ENCODE measurements at regions of chr14 and their contacts with region 1.

Region 1: DNA sequence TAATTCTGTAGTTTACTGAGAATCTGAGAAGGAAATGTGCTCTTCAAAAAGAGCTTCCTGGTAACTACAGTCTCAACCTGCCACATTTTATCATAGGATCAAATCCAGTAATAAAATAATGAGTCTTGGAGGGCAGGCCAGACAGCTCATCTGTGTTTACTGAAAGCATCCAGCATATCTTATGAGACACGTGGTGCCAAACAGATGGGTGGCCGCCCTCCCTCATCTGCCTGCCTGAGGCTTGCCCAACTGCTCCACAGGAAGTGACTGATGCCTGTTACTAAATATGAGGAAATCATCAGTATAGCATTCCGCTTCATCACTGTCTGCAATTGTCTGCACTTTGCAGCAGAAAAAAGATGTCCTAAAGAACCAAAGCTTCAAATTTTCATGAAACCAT is 13.5 kb downstream of the DHRS7 start:
- DNase-seq: peak; percentile 31 to 87 (median 74)
- ATAC-seq: peak; percentile 97
- H3K4me3 ChIP-seq: no peak overlapping the region
- H3K4me3 Mint-ChIP-seq: no peak overlapping the region
- H3K27ac ChIP-seq: peak overlapping the region; percentile 28 to 87
- H3K27ac Mint-ChIP-seq: peak overlapping the region; percentile 93
- H3K4me1 ChIP-seq: peaks cover 39% of the 10 kb centered on the region
- H3K4me1 Mint-ChIP-seq: peaks cover 54% of the 10 kb centered on the region
- H3K27me3 ChIP-seq: no peaks in the 10 kb centered on the region
- H3K27me3 Mint-ChIP-seq: no peaks in the 10 kb centered on the region
- CTCF ChIP-seq: no peak

Region 2: GRCh38 chr14:60164712-60165546 is 13.2 kb after region 1 on chr14 and contains the start of gene DHRS7:
- CTCF ChIA-PET with region 1: interaction called, 8 read pairs
- POLR2A ChIA-PET with region 1: interaction called, 15 read pairs
- intact Hi-C with region 1: loop called in 1 of 2 experiments (anchors 2 kb)
- DNase-seq: peak; percentile 28 to 89 (median 62)
- ATAC-seq: peak; percentile 70
- H3K4me3 ChIP-seq: peak within 1 kb of the TSS; percentile 68 to 88
- H3K4me3 Mint-ChIP-seq: peak within 1 kb of the TSS; percentile 99
- H3K27ac ChIP-seq: peak within 1 kb of the TSS; percentile 82 to 95
- H3K27ac Mint-ChIP-seq: peak within 1 kb of the TSS; percentile 100
- H3K4me1 ChIP-seq: peaks cover 31% of the 10 kb centered on the region
- H3K4me1 Mint-ChIP-seq: peaks cover 52% of the 10 kb centered on the region
- H3K27me3 ChIP-seq: no peaks in the 10 kb centered on the region
- H3K27me3 Mint-ChIP-seq: no peaks in the 10 kb centered on the region
- CTCF ChIP-seq: no peak
- total RNA-seq, gene DHRS7: 26.6 to 27.6 TPM